ENCODE measurements at regions of chr12 and their contacts with region 1.

Region 1: GRCh38 chr12:53065975-53066931 is 12.9 kb downstream of the SPRYD3 start:
- DNase-seq: peak; percentile 57
- ATAC-seq: peak; percentile 66
- H3K4me3 ChIP-seq: no peak overlapping the region
- H3K27ac ChIP-seq: no peak overlapping the region
- H3K4me1 ChIP-seq: peaks cover 25% of the 10 kb centered on the region
- H3K27me3 ChIP-seq: no peaks in the 10 kb centered on the region
- CTCF ChIP-seq: peak; percentile 95
- EP300 ChIP-seq: no peak
- POLR2A ChIP-seq: no peak
- RAD21 ChIP-seq: peak; percentile 95

Region 2: DNA sequence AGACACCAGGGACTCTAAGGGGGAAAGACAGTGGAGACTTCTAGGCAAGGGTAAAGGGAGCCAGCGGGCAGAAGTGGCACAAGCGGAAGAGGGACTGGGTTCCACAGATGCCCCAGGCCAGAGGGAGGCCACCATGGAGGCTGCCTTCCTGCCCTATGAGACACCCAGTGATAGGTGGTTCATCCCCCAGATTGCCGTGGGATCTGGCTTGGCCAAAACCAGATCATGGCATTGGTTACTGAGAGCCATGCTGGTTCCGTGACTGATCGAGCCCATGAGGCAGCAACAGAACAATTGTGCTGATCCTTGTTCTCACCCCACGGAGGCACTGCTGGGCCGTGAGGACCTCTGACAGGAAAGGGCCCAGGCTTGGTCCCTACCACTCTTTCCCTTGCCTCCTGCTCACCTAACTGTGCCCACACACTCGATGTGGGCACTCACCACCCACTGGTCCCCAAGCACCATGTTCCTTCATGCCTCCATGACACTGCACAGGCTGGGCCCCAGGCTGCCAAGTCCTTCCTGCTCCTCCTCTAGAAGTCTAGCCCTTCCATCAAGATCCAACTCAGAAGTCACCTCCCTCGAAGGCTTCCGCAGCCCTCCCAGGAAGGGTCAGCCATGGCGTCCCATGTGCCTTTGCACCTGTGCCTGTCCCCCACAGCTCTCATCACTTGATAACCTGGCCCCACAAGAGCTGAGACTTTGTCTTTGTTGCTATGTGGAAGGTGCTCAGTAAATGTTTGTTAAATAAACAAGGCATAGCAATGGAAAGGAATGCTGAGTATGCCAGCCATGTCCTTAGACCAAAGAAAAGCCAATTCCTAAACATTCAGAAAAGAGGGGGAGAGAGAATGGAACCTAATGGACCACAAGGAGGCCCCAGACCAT is 239.4 kb before region 1 on chr12:
- CTCF ChIA-PET with region 1: no interaction called
- POLR2A ChIA-PET with region 1: no interaction called
- in situ Hi-C with region 1: no loop called
- intact Hi-C with region 1: no loop called
- DNase-seq: peak; percentile 21
- ATAC-seq: no peak; the same call in 2 of the 3 replicates
- H3K4me3 ChIP-seq: no peak overlapping the region
- H3K27ac ChIP-seq: no peak overlapping the region
- H3K4me1 ChIP-seq: peaks cover 9% of the 10 kb centered on the region
- H3K27me3 ChIP-seq: peaks cover 1 to 24% of the 10 kb centered on the region in 2 experiments; a peak in 3 of 5 replicates
- CTCF ChIP-seq: no peak
- EP300 ChIP-seq: no peak
- POLR2A ChIP-seq: no peak
- RAD21 ChIP-seq: no peak

Region 3: DNA sequence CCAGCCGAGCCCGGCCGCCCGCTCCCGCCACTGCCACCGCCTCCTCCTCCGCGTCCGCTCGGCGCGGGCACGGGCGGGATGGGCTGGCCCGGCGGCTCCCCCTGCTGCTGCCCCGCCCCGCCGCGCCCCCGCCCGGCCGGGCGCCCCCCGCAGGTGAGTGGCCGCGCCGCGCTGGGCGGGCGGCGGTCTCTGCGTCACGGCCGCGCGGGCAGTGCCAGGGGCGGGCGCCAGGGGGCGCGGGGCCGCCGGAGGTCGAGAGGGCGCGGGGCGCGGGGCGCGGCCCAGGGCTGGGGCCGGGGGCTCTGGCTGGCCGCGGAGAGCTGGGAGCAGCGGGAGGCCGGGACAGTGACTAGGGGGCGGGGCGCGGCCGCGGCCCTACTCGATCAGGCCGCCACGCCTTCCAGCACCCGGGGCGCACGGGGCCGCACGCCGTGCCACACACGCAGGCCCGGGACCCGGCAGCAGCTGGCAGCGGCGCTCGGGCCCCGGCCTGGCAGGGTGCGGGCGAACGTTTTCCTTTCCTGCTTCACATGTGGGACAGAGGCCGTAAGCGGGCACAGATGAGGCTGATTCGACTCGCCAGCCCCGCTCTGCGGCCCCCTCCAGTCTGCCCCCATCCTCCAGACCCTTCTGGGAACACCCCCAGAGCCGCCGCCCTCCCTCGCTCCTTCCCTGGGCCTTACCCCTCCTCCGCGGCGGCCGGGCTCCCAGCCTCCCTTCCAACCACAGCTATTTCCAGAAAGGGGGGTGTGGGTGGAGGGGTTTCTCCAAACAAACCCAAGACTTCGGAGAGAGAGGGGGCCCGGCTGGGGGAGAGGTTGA is 18.8 kb before region 1 on chr12:
- CTCF ChIA-PET with region 1: interaction called, 4 read pairs
- POLR2A ChIA-PET with region 1: interaction called, 50 read pairs
- in situ Hi-C with region 1: no loop called
- intact Hi-C with region 1: no loop called
- DNase-seq: peak; percentile 44
- ATAC-seq: peak; percentile 2
- H3K4me3 ChIP-seq: peak overlapping the region; percentile 77 to 91 (median 83)
- H3K27ac ChIP-seq: peak overlapping the region; percentile 89
- H3K4me1 ChIP-seq: peaks cover 79% of the 10 kb centered on the region
- H3K27me3 ChIP-seq: no peaks in the 10 kb centered on the region; a peak in 1 of 5 replicates
- CTCF ChIP-seq: peak; percentile 3; the same call in 1 of the 2 replicates
- EP300 ChIP-seq: no peak
- POLR2A ChIP-seq: 0 out of 4 replicates have a peak, but pooled peaks of 1 of the 2 experiments have one; percentile 3
- RAD21 ChIP-seq: 0 out of 2 replicates have a peak, but pooled peaks have one; percentile 18

Region 4: GRCh38 chr12:53054112-53054833 is 12.0 kb before region 1 on chr12:
- CTCF ChIA-PET with region 1: no interaction called
- POLR2A ChIA-PET with region 1: interaction called, 50 read pairs
- in situ Hi-C with region 1: no loop called
- intact Hi-C with region 1: loop called (anchors 1 kb)
- DNase-seq: peak; percentile 83
- ATAC-seq: peak; percentile 19
- H3K4me3 ChIP-seq: peak overlapping the region; percentile 52 to 73 (median 60); a peak in 5 of 6 replicates
- H3K27ac ChIP-seq: peak overlapping the region; percentile 69
- H3K4me1 ChIP-seq: peaks cover 40% of the 10 kb centered on the region
- H3K27me3 ChIP-seq: no peaks in the 10 kb centered on the region
- CTCF ChIP-seq: no peak
- EP300 ChIP-seq: no peak
- POLR2A ChIP-seq: peak in 1 of 2 experiments; percentile 44; a peak in 1 of 4 replicates
- RAD21 ChIP-seq: no peak

Region 5: GRCh38 chr12:53190108-53190729 is 124.0 kb after region 1 on chr12:
- CTCF ChIA-PET with region 1: interaction called, 4 read pairs
- POLR2A ChIA-PET with region 1: interaction called, 10 read pairs
- in situ Hi-C with region 1: loop called (anchors 5 kb)
- intact Hi-C with region 1: no loop called
- DNase-seq: peak; percentile 49
- ATAC-seq: peak; percentile 88
- H3K4me3 ChIP-seq: no peak overlapping the region
- H3K27ac ChIP-seq: no peak overlapping the region
- H3K4me1 ChIP-seq: peaks cover 20% of the 10 kb centered on the region
- H3K27me3 ChIP-seq: no peaks in the 10 kb centered on the region
- CTCF ChIP-seq: peak; percentile 86
- EP300 ChIP-seq: no peak
- POLR2A ChIP-seq: peak in 1 of 2 experiments; percentile 6; a peak in 1 of 4 replicates
- RAD21 ChIP-seq: peak; percentile 86

Region 6: DNA sequence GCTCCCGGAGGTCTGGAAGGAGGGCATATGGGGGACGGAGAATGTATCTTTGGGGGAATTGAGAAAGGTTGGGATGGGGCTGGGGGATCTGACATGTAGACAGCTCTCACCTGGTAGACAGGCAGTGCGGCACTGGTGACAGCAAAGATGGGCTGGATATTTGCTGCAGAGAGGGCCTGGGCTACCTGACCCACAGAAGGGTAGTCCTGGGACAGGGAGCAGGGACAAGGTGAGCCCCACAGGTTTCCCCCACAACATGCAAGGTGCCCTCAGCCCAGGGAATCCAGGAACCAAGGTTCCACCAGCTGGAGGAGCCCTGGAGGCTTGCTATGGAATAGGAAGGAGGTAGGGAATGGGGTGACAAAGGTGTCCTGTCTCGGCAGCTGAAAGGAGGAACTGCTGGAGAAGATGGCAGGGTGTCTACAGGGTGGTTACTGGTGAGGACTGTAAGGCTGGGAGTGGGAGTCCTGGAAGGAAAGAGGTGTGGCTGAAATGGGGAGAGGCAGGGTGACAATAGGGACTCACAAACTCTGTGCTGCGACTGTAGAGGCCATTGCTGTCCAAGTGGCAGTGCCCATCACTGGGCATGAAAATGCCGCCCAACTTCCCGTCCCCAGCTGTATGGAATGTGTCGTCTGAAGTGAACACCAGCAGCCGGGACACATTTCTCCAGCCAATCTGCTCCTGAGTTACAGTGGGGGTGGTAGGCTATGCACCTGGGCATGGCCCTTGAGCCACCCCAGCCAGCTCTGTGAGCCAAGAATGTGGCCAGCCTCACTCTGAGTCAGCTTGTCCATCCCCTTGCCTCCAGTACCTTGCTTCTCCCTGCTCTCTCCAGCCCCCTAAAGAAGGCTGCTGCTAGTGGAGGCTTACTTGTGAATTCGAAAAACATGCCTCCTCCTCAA is 129.5 kb after region 1 on chr12:
- CTCF ChIA-PET with region 1: interaction called, 4 read pairs
- POLR2A ChIA-PET with region 1: interaction called, 10 read pairs
- in situ Hi-C with region 1: loop called (anchors 5 kb)
- intact Hi-C with region 1: loop called (anchors 1 kb)
- DNase-seq: no peak
- ATAC-seq: 0 out of 3 replicates have a peak, but pooled peaks have one; percentile 1
- H3K4me3 ChIP-seq: no peak overlapping the region
- H3K27ac ChIP-seq: no peak overlapping the region
- H3K4me1 ChIP-seq: peaks cover 42% of the 10 kb centered on the region
- H3K27me3 ChIP-seq: 0 out of 5 replicates have a peak, but pooled peaks cover 0 to 2% of the 10 kb centered on the region in 2 experiments
- CTCF ChIP-seq: no peak
- EP300 ChIP-seq: no peak
- POLR2A ChIP-seq: peak in 1 of 2 experiments; percentile 18; a peak in 1 of 4 replicates
- RAD21 ChIP-seq: no peak